Gastrocnemius medialis (tissue), 4 donors: ENCODE measurements at regions of chr6 and their contacts with region 1.

Region 1: DNA sequence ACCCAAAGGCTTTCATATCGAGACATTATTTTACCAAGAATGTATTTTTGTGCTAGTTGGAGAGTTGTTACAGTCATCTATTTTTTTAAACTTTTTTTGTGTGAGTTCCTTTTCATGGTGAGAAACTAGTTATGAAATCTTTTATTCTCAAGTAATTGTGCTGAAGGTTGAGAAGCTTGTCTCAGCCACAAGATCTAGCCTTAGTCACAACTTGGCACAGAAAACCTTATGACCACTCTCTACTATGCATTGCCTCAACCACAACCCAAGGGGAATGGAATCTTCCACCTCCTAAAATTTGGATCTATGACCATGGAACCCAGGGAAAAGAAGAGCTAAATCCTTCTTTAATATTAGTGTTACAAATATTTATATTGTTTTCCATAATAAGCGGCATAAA is 58.5 kb downstream of the HS3ST5 start:
- DNase-seq: no peak
- ATAC-seq: no peak
- H3K4me3 ChIP-seq: no peak overlapping the region
- H3K27ac ChIP-seq: no peak overlapping the region
- H3K4me1 ChIP-seq: no peaks in the 10 kb centered on the region
- H3K27me3 ChIP-seq: no peaks in the 10 kb centered on the region
- CTCF ChIP-seq: no peak
- POLR2A ChIP-seq: no peak

Region 2: DNA sequence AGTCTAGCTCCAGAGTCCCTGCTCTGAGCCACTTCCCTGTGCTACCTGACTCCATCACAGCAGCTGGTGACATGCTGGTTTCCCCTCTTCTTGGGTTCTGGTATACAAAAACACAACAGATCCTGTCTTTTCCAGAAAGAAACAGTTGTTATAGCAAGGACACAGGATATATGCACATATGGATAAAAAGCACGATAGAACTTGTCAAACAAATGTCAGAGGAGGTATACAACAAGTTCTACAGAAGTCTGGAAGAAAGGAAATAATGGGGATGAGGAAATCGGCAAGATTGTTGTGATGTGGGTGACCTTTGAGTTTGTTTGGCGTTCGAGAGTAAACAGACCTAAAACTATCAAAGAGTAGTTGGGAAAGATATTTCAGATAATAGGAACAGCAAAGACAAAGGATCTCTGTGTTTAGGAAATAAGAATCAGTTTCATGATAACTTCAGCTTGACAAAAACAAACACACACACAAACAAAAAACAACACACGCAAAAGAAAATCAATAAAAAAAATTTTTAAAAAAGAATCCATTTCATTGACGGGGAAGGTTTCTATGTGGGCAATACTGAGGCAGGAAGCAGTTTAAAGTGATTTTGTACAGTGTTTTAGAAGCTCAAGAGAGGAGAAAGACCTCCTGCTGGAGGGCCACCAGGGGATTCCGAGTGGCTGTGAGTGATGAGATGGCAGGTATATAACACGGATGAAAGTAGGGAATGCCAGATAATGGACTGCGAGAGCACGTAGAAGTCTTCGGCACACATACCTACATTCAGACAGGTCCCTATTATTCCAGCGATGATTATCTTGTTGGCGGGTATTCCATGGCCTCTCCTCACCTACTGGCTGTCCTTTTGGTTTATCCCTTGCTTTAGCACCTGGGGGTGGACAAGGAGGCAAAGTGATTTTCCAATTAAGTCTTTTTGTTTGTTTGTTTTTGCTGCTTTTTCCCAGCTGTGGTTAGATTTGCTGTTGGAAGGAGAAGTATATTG is 116.4 kb before region 1 on chr6:
- in situ Hi-C with region 1: loop called in 1 of 4 experiments (anchors 25 kb)
- intact Hi-C with region 1: no loop called
- DNase-seq: no peak
- ATAC-seq: no peak
- H3K4me3 ChIP-seq: no peak overlapping the region
- H3K27ac ChIP-seq: no peak overlapping the region
- H3K4me1 ChIP-seq: peaks cover 0 to 20% of the 10 kb centered on the region in 2 donors
- H3K27me3 ChIP-seq: no peaks in the 10 kb centered on the region
- CTCF ChIP-seq: no peak
- POLR2A ChIP-seq: no peak